Esophagus squamous epithelium (tissue), 5 donors: ENCODE measurements at regions of chr1 and their contacts with region 1.

Region 1: GRCh38 chr1:20682571-20683236 is 21.5 kb upstream of the DDOST start:
- DNase-seq: no peak
- H3K4me3 ChIP-seq: no peak overlapping the region
- H3K27ac ChIP-seq: no peak overlapping the region
- H3K4me1 ChIP-seq: peaks cover 0 to 5% (median 0%) of the 10 kb centered on the region in 3 donors
- H3K27me3 ChIP-seq: no peaks in the 10 kb centered on the region
- CTCF ChIP-seq: no peak
- POLR2A ChIP-seq: no peak

Region 2: DNA sequence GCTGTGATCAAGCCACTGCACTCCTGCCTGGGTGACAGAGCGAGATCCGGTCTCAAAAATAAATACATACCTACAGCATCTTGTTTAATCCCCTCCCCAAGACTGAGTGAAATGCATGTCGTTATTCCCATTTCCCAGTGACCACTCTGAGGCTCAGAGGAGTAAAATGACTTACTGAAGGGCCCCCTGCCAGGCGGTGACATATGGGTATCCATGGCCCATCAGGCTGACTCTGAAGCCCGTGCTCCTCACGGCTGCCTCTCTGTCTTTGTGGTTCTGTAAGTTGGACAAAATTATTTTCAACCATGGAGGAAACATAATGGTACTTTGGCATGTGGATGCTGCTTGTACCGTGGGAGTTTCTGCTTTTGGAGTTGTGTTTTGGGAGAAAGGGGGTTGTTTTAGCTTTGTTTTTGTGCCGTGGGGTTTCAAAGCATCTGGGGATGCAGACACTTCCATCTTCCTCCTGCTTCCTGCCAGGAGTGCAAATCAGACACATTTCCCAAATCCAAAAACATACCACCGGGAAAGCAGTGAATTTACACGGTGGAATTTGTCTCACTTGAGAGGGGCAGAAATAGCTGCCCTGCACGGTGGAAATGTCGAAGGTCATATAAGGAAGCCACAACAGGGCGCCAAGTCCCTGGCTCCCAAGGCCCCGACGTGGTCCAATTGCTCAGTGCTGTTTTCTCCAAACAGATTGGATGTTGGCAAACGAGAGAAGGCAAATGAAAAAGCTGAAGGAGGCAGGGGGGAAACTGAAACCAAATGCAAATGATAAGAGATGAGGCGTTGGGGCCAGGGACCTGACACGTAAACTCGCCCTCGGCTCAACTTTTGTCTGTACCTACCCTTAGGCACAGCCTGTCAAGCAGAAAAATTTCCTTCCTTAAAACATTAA is 66.5 kb before region 1 on chr1:
- intact Hi-C with region 1: no loop called
- DNase-seq: no peak
- H3K4me3 ChIP-seq: peak overlapping the region in 1 of 4 donors; percentile 24
- H3K27ac ChIP-seq: peak overlapping the region in 2 of 4 donors; percentile 22 to 56
- H3K4me1 ChIP-seq: peaks cover 0 to 35% (median 24%) of the 10 kb centered on the region in 3 donors
- H3K27me3 ChIP-seq: no peaks in the 10 kb centered on the region
- CTCF ChIP-seq: no peak
- POLR2A ChIP-seq: no peak

Region 3: GRCh38 chr1:20725189-20725872 is 42.6 kb after region 1 on chr1:
- intact Hi-C with region 1: loop called (anchors 2 kb)
- DNase-seq: no peak
- H3K4me3 ChIP-seq: no peak overlapping the region
- H3K27ac ChIP-seq: no peak overlapping the region
- H3K4me1 ChIP-seq: peaks cover 0 to 18% (median 0%) of the 10 kb centered on the region in 3 donors
- H3K27me3 ChIP-seq: peaks cover 0 to 29% (median 0%) of the 10 kb centered on the region in 4 donors
- CTCF ChIP-seq: no peak
- POLR2A ChIP-seq: no peak

Region 4: DNA sequence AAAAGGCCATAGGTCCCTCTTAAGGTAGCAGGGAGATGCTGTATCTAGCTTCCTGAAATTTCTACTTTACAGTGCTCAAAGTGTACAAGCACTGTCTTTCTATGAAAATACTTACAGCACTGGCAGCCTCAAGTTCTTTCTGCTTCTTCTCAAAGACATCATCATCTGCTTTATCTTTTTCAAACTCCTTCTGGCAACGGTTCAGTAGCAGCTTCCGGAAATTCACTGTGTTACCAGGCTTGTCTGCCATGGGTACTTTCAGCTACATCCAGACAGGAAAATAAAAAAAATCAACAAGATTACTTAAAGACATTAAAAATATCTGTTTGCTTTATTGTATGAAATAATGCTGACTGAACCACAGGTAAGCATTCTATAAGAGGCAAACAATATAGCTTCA is 182.3 kb after region 1 on chr1:
- intact Hi-C with region 1: no loop called
- DNase-seq: no peak
- H3K4me3 ChIP-seq: no peak overlapping the region
- H3K27ac ChIP-seq: no peak overlapping the region
- H3K4me1 ChIP-seq: no peaks in the 10 kb centered on the region
- H3K27me3 ChIP-seq: no peaks in the 10 kb centered on the region
- CTCF ChIP-seq: no peak
- POLR2A ChIP-seq: no peak